Panc1 (cell line): ENCODE measurements at regions of chr20 and their contacts with region 1.

Region 1: DNA sequence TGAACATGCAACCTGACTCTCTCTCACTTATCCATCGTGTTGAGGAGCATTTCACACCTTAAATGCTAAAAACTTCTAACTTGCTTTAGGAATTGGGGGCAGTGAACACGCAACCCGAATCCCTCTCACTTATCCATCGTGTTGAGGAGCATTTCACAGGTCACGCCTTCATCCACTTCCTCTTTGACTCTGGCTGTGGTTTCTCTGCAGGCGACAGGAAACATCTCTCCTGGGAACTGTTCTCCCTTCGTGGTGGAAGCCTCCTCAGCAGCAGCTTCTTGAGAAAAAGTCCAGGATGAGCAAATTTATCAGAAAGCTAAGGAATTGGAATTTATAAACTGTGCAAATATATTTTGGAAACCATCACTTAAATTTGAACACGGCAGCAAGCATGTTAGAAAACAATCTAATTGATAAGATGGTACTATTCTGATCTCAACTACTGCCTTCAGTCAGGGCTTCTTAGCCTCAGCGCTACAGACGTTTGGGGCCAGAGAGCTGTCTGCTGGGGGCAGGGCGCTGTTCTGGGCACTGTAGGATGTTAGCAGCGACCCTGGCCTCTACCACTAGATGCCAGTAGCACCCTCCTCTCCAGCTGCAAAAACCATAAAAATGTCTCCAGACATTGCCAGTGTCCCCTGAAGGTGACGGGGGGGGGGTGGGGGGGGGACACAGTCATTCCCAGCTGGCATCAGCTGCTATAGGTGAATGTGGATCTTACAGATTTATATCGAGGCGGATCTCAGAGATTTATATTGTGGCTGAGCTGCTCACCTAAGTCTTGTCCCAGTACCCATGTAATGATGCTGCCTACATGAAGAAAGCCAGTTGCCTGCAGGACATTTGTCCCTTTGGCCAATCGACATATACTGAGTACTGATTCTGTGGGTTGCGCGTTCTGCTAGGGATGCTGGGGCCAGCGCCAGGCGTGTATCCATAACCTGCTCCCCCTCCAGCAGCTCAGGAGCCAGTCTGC is 26.2 kb downstream of the CTCFL start:
- DNase-seq: no peak
- ATAC-seq: peak; percentile 85
- H3K4me3 ChIP-seq: no peak overlapping the region
- H3K27ac ChIP-seq: no peak overlapping the region
- H3K4me1 ChIP-seq: 0 out of 2 replicates have a peak, but pooled peaks cover 9% of the 10 kb centered on the region
- H3K27me3 ChIP-seq: no peaks in the 10 kb centered on the region
- CTCF ChIP-seq: peak; percentile 73

Region 2: DNA sequence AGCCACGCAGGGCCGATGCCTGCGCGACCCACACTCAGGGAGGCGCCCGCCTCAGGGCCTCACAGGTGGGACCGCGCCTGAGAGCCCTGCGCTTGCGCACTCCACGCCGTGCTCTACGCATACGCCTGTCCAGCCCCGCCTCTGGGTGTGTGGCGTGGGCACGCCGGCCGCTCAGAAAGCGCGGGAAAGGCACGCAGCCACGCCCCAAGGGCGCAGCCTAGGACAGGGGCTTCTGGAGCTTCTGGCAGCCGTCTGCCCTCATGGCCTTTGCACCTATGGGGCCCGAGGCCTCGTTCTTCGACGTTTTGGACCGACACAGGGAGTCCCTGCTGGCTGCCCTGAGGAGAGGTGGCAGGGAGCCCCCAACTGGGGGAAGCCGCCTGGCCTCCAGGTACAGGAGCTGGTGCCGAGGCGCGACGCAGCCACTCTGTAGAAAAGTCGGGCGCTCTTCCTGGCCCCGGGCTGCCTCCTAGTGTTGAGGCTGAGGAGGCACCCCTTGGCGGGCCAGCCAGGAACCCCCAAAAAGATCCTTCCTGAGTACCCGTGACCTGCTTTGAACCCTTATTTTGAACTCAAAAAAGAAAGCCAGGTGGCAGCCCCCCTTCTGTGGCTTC is 169.0 kb before region 1 on chr20 and contains the start of gene SPO11:
- CTCF ChIA-PET with region 1: no interaction called
- POLR2A ChIA-PET with region 1: no interaction called
- in situ Hi-C with region 1: no loop called
- intact Hi-C with region 1: no loop called
- DNase-seq: no peak
- ATAC-seq: no peak
- H3K4me3 ChIP-seq: no peak within 1 kb of the TSS
- H3K27ac ChIP-seq: no peak within 1 kb of the TSS
- H3K4me1 ChIP-seq: no peaks in the 10 kb centered on the region
- H3K27me3 ChIP-seq: peaks cover 21% of the 10 kb centered on the region
- CTCF ChIP-seq: peak; percentile 56
- total RNA-seq, gene SPO11: not detected

Region 3: GRCh38 chr20:57383447-57384347 is 115.0 kb before region 1 on chr20:
- CTCF ChIA-PET with region 1: interaction called, 3 read pairs
- POLR2A ChIA-PET with region 1: interaction called, 3 read pairs
- in situ Hi-C with region 1: no loop called
- intact Hi-C with region 1: loop called (anchors 1 kb)
- DNase-seq: no peak
- ATAC-seq: no peak
- H3K4me3 ChIP-seq: no peak overlapping the region
- H3K27ac ChIP-seq: no peak overlapping the region
- H3K4me1 ChIP-seq: no peaks in the 10 kb centered on the region; the same call in 1 of the 2 replicates
- H3K27me3 ChIP-seq: no peaks in the 10 kb centered on the region
- CTCF ChIP-seq: no peak

Region 4: DNA sequence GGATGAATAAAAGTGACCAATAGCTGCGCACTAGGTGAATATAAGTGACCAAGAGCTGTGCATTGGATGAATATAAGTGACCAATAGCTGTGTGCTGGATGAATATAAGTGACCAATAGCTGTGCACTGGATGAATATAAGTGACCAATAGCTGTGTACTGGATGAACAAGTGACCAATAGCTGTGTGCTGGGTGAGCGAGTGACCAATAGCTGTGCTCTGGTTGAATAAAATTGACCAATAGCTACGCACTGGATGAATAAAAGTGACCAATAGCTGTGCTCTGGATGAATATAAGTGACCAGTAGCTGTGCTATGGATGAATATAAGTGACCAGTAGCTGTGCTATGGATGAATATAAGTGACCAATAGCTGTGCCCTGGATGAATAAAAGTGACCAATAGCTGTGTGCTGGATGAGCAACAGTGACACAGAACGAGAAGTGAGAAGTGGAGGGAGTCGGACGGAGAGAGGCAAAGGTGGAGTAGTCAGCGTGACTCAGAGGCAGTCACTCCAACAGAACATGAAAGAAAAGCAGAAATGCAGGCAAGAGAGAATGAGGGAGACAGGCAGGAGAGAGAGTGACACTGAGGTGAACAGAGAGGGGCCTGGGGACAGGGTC is 69.0 kb before region 1 on chr20:
- CTCF ChIA-PET with region 1: no interaction called
- POLR2A ChIA-PET with region 1: interaction called, 12 read pairs
- in situ Hi-C with region 1: no loop called
- intact Hi-C with region 1: no loop called
- DNase-seq: no peak
- ATAC-seq: no peak
- H3K4me3 ChIP-seq: no peak overlapping the region
- H3K27ac ChIP-seq: no peak overlapping the region
- H3K4me1 ChIP-seq: no peaks in the 10 kb centered on the region
- H3K27me3 ChIP-seq: no peaks in the 10 kb centered on the region
- CTCF ChIP-seq: no peak